AG04450 (cell line): ENCODE measurements at regions of chr4 and their contacts with region 1.

Region 1: DNA sequence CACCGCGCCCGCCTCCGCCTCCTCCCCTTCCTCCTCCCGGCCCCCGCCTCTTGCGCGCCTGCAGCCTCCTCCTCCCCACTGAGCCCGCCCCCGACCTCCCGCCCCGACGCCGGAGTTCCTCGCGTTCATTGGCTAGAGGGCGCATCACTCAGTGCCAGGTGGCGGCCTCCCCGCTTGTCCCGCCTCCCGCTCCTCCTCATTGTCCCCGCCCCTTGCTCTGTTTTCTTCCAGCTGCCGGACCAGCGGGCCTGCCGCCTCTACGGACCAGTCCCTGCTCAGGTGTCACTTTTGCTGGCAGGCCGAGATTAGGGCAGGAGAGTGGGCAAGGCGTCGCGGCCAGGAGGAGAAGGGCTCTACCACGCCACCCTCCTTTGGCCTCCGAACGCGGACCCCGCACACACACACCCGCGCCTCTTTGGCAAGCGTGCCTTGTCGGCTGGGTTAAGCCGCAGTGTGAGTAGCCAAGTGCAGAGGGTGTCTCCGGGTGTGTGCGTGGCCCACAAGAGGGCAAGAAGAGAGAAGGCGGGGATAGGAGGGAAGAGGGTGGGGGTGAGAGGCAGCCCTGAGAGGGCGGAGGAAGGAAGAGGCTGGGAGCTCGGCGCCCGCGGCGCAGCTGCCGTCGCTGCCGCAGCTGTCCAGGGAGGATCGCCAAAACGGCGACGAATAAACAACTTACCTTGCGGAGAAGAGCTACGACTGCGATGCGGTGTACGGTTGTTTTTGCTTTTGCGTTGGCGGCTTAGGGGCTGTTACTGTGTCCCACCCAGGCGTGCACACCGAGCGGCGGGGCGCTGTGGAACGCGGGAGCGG is 436 bp upstream of the PPP3CA start:
- DNase-seq: peak; percentile 93
- H3K4me3 ChIP-seq: peak overlapping the region; percentile 94
- H3K27ac ChIP-seq: peak overlapping the region; percentile 96
- H3K27me3 ChIP-seq: no peaks in the 10 kb centered on the region
- CTCF ChIP-seq: no peak; the same call in 1 of the 2 replicates

Region 2: GRCh38 chr4:101277671-101278070 is 70.1 kb before region 1 on chr4:
- CTCF ChIA-PET with region 1: no interaction called
- POLR2A ChIA-PET with region 1: interaction called, 11 read pairs
- DNase-seq: peak; percentile 18
- H3K4me3 ChIP-seq: no peak overlapping the region
- H3K27ac ChIP-seq: no peak overlapping the region
- H3K27me3 ChIP-seq: no peaks in the 10 kb centered on the region
- CTCF ChIP-seq: no peak

Region 3: DNA sequence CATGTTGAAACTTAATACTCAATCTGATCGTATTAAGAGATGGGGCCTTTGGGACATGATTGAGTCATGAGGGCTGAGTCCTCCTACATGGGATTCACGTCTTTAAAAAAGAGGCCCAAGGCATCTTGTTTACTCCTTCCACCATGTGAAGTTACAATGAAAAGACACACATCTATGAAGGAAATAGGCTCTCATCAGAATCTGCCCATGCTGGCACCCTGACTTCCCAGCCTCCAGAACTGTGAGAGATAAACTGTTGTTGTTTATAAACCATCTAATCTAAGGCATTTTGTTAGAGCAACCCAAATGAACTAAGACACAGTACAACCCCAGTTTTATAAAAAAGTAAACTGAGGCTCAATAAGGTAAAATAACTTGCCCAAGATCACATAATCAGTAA is 32.7 kb before region 1 on chr4:
- CTCF ChIA-PET with region 1: no interaction called
- POLR2A ChIA-PET with region 1: no interaction called
- DNase-seq: no peak
- H3K4me3 ChIP-seq: no peak overlapping the region
- H3K27ac ChIP-seq: no peak overlapping the region
- H3K27me3 ChIP-seq: no peaks in the 10 kb centered on the region
- CTCF ChIP-seq: no peak

Region 4: DNA sequence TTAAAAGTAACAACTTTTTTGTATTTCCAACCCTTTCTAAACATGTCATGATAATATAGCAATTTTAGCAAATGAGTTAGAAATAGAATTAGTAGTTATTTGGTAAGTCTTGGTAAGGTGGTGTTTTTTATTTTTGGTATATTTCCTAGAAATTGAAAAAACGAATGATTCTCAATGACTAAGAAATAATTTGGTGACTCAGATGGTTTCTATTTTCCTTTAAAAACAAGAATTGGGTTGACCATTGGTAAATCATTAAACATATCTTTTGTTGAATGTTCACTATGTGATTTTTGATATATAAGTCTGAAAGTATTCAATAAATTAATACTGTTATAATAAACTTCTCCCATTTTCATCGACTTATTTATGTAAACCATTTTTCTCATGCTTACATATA is 236.5 kb after region 1 on chr4:
- CTCF ChIA-PET with region 1: no interaction called
- POLR2A ChIA-PET with region 1: no interaction called
- DNase-seq: no peak
- H3K4me3 ChIP-seq: no peak overlapping the region
- H3K27ac ChIP-seq: no peak overlapping the region
- H3K27me3 ChIP-seq: peaks cover 2% of the 10 kb centered on the region
- CTCF ChIP-seq: no peak